Activated CD4-positive, alpha-beta memory T cell treated with anti-CD3 and anti-CD28 coated beads for 36 hours (primary cell): ENCODE measurements at regions of chr16 and their contacts with region 1.

Region 1: DNA sequence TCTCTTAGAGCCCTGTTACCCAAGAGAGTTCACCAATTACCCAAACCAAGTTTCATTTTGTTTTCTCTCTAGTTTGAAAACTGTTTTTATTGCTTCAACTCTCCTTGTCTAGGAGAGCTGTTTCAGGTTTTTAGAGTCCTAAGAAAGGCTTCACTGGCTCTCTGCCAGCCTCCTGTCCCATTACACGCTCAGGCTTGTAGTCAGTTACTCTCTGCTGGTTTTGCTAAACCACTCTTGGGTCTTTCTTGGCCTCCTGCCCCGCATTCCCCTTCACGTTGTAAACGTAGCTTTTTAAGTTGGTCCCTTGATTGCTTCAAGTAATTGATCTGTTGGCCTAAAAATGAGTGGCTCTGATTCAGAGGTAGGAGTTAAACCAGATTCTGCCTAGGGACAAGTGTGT is 529.1 kb downstream of the MAF start:
- DNase-seq: no peak
- H3K4me3 Mint-ChIP-seq: no peak overlapping the region
- H3K27ac Mint-ChIP-seq: peak overlapping the region; percentile 84
- H3K4me1 Mint-ChIP-seq: peaks cover 74% of the 10 kb centered on the region
- H3K27me3 Mint-ChIP-seq: peaks cover 4% of the 10 kb centered on the region

Region 2: GRCh38 chr16:78742501-78743283 is 328.7 kb before region 1 on chr16:
- CTCF ChIA-PET with region 1: no interaction called
- POLR2A ChIA-PET with region 1: no interaction called
- intact Hi-C with region 1: no loop called
- DNase-seq: peak; percentile 94
- H3K4me3 Mint-ChIP-seq: peak overlapping the region; percentile 73
- H3K27ac Mint-ChIP-seq: peak overlapping the region; percentile 95
- H3K4me1 Mint-ChIP-seq: peaks cover 40% of the 10 kb centered on the region
- H3K27me3 Mint-ChIP-seq: no peaks in the 10 kb centered on the region

Region 3: DNA sequence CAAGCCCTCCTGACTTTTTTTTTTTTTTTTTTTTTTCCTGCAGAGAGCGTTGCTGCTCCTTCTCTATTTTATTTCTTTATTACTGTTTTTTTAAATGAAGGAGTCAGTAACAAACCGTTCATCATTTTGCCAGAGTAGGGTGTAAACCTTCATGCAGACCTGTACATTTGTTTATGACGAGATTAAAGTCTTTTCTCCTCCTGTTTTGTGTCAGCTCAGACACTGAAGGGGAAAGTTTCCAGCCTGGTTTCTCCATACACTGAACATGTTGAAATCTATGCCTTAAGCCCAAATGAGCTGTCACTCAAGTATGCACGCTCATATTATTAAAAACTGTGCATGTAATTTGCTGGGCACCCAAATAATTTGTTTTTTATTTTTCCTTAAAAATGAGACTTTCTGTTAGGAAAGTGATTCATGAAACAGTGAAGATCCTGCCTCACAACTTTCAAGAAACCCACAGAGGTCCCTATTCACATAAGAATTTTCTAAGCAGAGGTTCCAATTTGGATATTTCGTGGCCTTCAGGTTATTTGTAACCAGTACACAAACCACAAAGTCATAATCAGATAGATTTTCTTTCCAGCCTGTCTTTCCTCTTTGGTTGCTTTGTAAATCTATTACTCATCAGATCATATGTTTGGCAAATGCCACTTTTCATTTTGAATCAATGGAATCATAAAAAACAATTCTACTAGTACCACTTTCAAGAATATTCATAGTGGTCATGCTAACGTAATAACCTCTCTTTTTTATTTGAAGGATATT is 171.2 kb before region 1 on chr16:
- CTCF ChIA-PET with region 1: interaction called, 5 read pairs
- POLR2A ChIA-PET with region 1: interaction called, 4 read pairs
- intact Hi-C with region 1: loop called (anchors 1 kb)
- DNase-seq: no peak
- H3K4me3 Mint-ChIP-seq: peak overlapping the region; percentile 20
- H3K27ac Mint-ChIP-seq: peak overlapping the region; percentile 96
- H3K4me1 Mint-ChIP-seq: peaks cover 76% of the 10 kb centered on the region
- H3K27me3 Mint-ChIP-seq: no peaks in the 10 kb centered on the region

Region 4: DNA sequence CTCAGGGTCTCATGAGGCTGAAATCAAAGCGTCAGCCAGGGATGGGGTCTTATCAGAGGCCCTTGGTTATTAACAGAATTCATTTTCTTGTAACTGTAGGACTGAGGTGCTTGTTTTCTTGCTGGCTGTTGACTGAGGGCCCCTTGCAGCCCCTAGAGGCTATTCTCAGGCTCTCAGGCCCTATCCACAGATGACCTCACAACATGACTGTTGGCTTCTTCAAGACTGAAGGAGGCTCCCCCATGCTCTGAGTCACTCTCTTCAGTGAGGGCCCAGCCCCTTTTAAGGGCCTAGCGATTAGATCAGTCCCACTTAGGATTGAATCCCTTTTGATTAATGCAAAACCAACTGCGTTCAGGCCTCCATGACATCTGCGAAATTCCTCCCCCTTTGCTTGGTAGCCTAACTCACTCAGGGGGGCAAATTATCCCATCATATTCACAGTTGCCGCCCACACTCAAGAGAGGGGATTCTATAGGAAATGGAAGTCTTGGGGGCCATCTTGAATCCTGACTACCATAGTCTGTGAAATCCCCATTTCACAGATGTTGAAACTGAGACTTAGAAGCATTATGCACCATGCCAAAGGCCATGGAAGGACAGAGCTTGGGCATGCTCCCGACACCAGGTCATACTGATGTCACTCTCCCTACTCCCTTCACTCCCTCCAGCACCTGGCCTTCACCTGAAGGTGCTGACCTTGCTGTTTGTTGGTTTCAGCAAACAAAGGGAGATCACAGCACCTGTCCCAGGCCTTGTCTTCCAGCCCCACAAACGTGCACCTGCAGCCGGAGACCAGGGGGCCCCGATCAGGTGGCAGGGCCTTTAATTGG is 63.2 kb before region 1 on chr16:
- CTCF ChIA-PET with region 1: no interaction called
- POLR2A ChIA-PET with region 1: interaction called, 8 read pairs
- intact Hi-C with region 1: loop called (anchors 1 kb)
- DNase-seq: peak; percentile 60
- H3K4me3 Mint-ChIP-seq: no peak overlapping the region
- H3K27ac Mint-ChIP-seq: peak overlapping the region; percentile 90
- H3K4me1 Mint-ChIP-seq: peaks cover 45% of the 10 kb centered on the region
- H3K27me3 Mint-ChIP-seq: no peaks in the 10 kb centered on the region

Region 5: GRCh38 chr16:79089735-79090284 is 18.4 kb after region 1 on chr16:
- CTCF ChIA-PET with region 1: interaction called, 3 read pairs
- POLR2A ChIA-PET with region 1: interaction called, 23 read pairs
- intact Hi-C with region 1: loop called (anchors 1 kb)
- DNase-seq: peak; percentile 85
- H3K4me3 Mint-ChIP-seq: peak overlapping the region; percentile 45
- H3K27ac Mint-ChIP-seq: peak overlapping the region; percentile 86
- H3K4me1 Mint-ChIP-seq: peaks cover 59% of the 10 kb centered on the region
- H3K27me3 Mint-ChIP-seq: no peaks in the 10 kb centered on the region

Region 6: GRCh38 chr16:79182616-79183015 is 111.2 kb after region 1 on chr16:
- CTCF ChIA-PET with region 1: no interaction called
- POLR2A ChIA-PET with region 1: no interaction called
- intact Hi-C with region 1: loop called (anchors 5 kb)
- DNase-seq: peak; percentile 27
- H3K4me3 Mint-ChIP-seq: no peak overlapping the region
- H3K27ac Mint-ChIP-seq: no peak overlapping the region
- H3K4me1 Mint-ChIP-seq: peaks cover 22% of the 10 kb centered on the region
- H3K27me3 Mint-ChIP-seq: no peaks in the 10 kb centered on the region